Activated CD4-positive, alpha-beta T cell treated with anti-CD3 and anti-CD28 coated beads, Interleukin-2, amount 10 ng/mL, durations not matched to agents 24 days and 14 days (primary cell): ENCODE measurements at regions of chr3 and their contacts with region 1.

Region 1: GRCh38 chr3:172595641-172596393 is 72.6 kb upstream of the TNFSF10 start:
- DNase-seq: peak; percentile 87
- H3K4me3 Mint-ChIP-seq: peak overlapping the region; percentile 80
- H3K27ac Mint-ChIP-seq: peak overlapping the region; percentile 68
- H3K4me1 Mint-ChIP-seq: peaks cover 57% of the 10 kb centered on the region
- H3K27me3 Mint-ChIP-seq: peaks cover 3% of the 10 kb centered on the region

Region 2: DNA sequence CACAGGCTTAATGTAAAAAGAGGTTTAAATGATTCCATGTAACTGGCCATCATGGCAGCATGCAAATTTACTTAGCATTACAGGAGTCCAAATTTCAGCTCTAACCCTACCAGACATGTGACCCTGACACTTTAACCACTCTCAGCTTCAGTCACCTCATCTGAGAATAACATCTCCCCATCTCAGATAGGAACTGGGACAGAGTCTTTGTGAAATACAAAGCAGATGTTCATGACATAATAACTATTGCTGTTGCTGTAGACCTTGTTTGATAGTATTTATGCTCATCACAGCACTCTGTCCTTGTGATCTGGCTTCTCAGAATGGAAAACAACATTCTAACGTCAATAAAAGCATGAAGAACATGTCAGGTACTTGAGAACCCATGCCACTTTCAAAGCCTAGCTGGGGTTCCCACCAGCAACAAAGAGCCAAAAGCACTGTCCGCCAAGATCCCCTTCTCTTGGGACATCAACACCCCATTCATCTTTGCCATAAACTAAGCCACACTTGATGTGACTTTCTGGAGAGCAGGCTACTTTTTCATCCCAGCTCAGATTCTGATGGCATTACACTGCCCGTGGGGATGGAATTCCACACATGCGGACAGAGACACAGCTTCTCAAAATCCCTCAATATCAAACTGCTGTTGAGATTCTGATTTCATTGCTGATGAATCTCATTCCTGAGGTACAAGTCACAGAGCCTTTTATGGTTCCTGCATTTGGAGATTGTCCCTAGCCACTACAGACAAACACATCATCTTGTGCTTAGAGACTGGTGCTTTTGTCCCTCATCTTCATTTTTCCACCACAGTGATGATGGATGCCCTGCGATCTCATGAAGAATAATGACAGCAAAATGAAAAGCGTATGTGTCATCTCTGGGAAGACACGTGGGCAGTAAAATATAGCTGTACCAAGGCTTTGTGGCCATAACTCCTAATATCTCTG is 1338.3 kb before region 1 on chr3:
- intact Hi-C with region 1: loop called (anchors 10 kb)
- DNase-seq: peak; percentile 69
- H3K4me3 Mint-ChIP-seq: peak overlapping the region; percentile 49
- H3K27ac Mint-ChIP-seq: peak overlapping the region; percentile 93
- H3K4me1 Mint-ChIP-seq: peaks cover 81% of the 10 kb centered on the region
- H3K27me3 Mint-ChIP-seq: no peaks in the 10 kb centered on the region

Region 3: GRCh38 chr3:172511783-172512762 is 83.7 kb before region 1 on chr3:
- intact Hi-C with region 1: loop called (anchors 1 kb)
- DNase-seq: peak; percentile 93
- H3K4me3 Mint-ChIP-seq: peak overlapping the region; percentile 77
- H3K27ac Mint-ChIP-seq: peak overlapping the region; percentile 92
- H3K4me1 Mint-ChIP-seq: peaks cover 82% of the 10 kb centered on the region
- H3K27me3 Mint-ChIP-seq: no peaks in the 10 kb centered on the region

Region 4: GRCh38 chr3:172530566-172530965 is 65.3 kb before region 1 on chr3:
- intact Hi-C with region 1: loop called (anchors 1 kb)
- DNase-seq: peak; percentile 85
- H3K4me3 Mint-ChIP-seq: peak overlapping the region; percentile 76
- H3K27ac Mint-ChIP-seq: peak overlapping the region; percentile 97
- H3K4me1 Mint-ChIP-seq: peaks cover 49% of the 10 kb centered on the region
- H3K27me3 Mint-ChIP-seq: no peaks in the 10 kb centered on the region

Region 5: GRCh38 chr3:172557221-172558220 is 38.3 kb before region 1 on chr3:
- intact Hi-C with region 1: loop called (anchors 1 kb)
- DNase-seq: no peak
- H3K4me3 Mint-ChIP-seq: no peak overlapping the region
- H3K27ac Mint-ChIP-seq: no peak overlapping the region
- H3K4me1 Mint-ChIP-seq: peaks cover 40% of the 10 kb centered on the region
- H3K27me3 Mint-ChIP-seq: no peaks in the 10 kb centered on the region

Region 6: DNA sequence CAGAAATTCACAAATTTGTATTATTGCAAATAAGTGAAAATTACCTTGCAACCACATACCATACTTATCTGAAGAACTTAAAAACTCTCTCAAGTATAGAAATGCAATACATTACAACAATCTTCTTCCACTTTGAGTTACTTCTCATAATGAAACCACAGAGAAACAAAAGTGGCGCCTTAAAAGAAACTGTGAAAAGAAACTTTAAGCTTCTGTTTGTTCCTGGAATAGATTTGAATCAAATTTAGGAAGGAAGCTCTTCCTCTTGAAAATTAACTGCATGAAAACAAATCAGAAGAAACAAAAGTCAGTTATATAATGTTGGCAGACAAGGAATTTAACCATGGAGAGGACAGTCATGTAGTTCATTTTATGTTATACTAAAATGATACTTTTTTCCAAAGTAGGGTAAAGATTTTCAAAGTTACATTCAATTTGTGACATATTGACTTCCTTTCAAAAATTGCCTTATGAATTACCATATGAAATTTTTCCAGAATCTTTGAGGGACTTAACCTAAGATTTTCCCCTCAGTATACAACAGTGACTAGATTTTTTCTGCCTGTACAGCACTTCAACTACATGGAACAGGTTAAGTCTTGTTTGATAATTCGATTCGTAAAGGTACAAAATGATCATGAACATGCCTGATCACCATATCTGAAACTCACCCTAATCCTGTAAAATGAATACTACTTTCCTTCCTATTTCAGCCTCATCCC is 15.0 kb before region 1 on chr3:
- intact Hi-C with region 1: loop called (anchors 1 kb)
- DNase-seq: peak; percentile 67
- H3K4me3 Mint-ChIP-seq: peak overlapping the region; percentile 74
- H3K27ac Mint-ChIP-seq: peak overlapping the region; percentile 91
- H3K4me1 Mint-ChIP-seq: peaks cover 91% of the 10 kb centered on the region
- H3K27me3 Mint-ChIP-seq: no peaks in the 10 kb centered on the region

Region 7: DNA sequence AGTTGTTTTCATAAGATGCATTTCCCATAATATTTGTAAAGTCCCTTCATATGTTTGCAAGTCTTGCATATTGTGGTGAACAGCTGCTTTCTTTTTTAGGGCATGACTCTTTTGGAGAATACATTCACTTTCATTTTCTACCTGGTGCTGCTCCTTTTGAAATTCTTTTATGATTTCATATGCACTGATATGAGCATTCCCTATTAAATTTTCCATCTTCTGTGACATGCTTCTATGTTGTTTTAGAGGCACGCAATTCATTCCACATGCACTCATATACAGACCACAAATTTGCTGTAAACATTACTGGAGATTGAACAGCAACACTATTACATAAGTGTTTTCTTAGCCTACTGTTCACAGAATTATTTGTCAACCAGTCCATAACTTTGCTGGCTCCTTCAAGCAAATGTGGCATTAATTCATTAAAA is 20.2 kb after region 1 on chr3:
- intact Hi-C with region 1: no loop called
- DNase-seq: no peak
- H3K4me3 Mint-ChIP-seq: peak overlapping the region; percentile 60
- H3K27ac Mint-ChIP-seq: peak overlapping the region; percentile 83
- H3K4me1 Mint-ChIP-seq: peaks cover 20% of the 10 kb centered on the region
- H3K27me3 Mint-ChIP-seq: no peaks in the 10 kb centered on the region

Region 8: DNA sequence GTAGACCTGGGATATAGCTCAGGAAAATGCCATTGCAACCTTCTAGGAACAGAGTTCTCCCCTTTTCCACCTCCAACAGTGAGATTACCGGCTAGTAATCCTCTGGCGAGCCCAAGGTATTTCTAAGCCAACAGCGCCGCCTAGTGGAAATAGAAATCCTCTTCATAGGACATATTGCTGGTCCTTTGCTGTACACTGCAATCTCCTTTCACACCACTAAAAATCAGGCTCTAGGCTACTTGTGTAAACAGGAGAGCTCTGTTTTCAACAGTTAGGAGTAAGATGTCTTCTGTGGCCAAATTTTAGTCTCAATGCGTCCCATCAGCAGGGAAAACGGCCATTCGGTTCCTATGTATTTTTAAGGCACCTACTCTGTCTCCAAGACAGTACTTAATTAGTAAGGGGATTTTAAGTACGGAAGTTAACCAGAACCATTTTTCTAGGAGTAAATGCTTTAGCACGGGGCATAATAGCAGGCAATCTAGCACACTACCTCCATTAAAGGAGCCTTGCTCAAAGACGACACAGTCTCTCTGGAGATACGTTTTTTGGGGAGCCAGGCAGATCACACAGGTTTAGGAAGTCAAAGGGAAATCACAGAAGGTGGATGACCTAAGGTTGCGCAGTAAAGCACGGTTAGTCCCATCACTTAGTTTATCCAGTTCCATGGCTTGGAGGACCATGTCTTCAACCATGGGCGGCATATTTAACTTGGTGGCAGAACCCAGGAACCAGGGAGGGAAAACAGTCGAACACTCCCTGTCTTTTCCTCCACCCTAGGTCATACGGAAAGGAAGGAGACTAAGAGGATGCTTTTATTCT is 71.3 kb after region 1 on chr3:
- intact Hi-C with region 1: loop called (anchors 2 kb)
- DNase-seq: peak; percentile 95
- H3K4me3 Mint-ChIP-seq: no peak overlapping the region
- H3K27ac Mint-ChIP-seq: no peak overlapping the region
- H3K4me1 Mint-ChIP-seq: peaks cover 16% of the 10 kb centered on the region
- H3K27me3 Mint-ChIP-seq: peaks cover 5% of the 10 kb centered on the region